Aorta (tissue), 5 donors: ENCODE measurements at regions of chr6 and their contacts with region 1.

Region 1: GRCh38 chr6:111503207-111503606 is 20.2 kb upstream of the REV3L start:
- DNase-seq: no peak
- ATAC-seq: no peak
- H3K4me3 ChIP-seq: no peak overlapping the region
- H3K27ac ChIP-seq: no peak overlapping the region
- H3K4me1 ChIP-seq: no peaks in the 10 kb centered on the region
- H3K27me3 ChIP-seq: no peaks in the 10 kb centered on the region

Region 2: GRCh38 chr6:111541026-111541681 is 37.9 kb after region 1 on chr6:
- intact Hi-C with region 1: loop called in 1 of 2 experiments (anchors 5 kb)
- DNase-seq: no peak
- ATAC-seq: no peak
- H3K4me3 ChIP-seq: no peak overlapping the region
- H3K27ac ChIP-seq: no peak overlapping the region
- H3K4me1 ChIP-seq: peaks cover 0 to 2% of the 10 kb centered on the region in 2 donors
- H3K27me3 ChIP-seq: no peaks in the 10 kb centered on the region

Region 3: DNA sequence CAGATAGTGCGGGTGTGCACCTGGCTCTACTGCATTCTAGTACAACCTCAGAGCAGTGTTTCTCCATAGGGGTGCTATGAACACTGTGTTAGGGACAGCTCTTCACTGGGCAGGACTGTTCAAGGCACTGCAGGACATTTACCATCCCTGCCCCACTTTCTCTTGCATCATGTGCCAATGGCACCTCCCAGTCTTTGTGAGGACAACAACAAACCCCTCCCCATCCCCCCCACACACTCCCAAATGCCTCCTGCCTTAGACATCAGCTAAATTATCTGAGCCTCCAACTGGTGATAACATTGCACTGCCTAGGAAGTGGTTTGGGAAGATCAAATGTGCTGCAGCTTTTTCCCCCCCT is 271.1 kb after region 1 on chr6:
- intact Hi-C with region 1: no loop called
- DNase-seq: no peak
- ATAC-seq: no peak
- H3K4me3 ChIP-seq: no peak overlapping the region
- H3K27ac ChIP-seq: no peak overlapping the region
- H3K4me1 ChIP-seq: no peaks in the 10 kb centered on the region
- H3K27me3 ChIP-seq: no peaks in the 10 kb centered on the region